ENCODE measurements at regions of chr1 and their contacts with region 1.

Region 1: GRCh38 chr1:16946646-16947045 is 24.9 kb downstream of the CROCC start:
- DNase-seq: no peak
- ATAC-seq: no peak
- H3K4me3 ChIP-seq: no peak overlapping the region
- H3K27ac ChIP-seq: no peak overlapping the region
- H3K4me1 ChIP-seq: no peaks in the 10 kb centered on the region
- H3K27me3 ChIP-seq: no peaks in the 10 kb centered on the region
- CTCF ChIP-seq: no peak
- EP300 ChIP-seq: no peak
- POLR2A ChIP-seq: no peak
- RAD21 ChIP-seq: no peak

Region 2: DNA sequence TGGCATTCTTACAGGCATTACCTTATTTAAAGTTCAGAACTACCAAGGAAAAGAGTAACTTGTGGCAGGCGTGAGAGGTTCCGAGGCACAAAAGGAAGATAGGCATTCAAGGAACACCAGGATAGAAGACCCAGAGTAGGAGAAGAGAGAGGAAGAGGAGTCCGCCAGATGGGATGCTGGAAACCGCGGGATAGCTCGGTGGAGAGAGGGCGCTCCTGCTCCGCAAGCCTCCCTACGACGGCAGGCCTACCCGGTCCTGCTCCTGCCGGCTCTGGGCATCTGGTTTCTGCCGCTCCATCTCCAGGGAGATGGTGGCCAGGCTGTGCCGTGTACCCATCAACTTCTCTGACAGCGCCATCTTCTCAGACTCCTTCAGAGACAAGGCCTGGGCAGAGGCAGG is 327.9 kb before region 1 on chr1:
- CTCF ChIA-PET with region 1: interaction called, 6 read pairs
- POLR2A ChIA-PET with region 1: interaction called, 15 read pairs
- in situ Hi-C with region 1: no loop called
- intact Hi-C with region 1: loop called (anchors 1 kb)
- DNase-seq: no peak
- ATAC-seq: no peak
- H3K4me3 ChIP-seq: no peak overlapping the region
- H3K27ac ChIP-seq: no peak overlapping the region
- H3K4me1 ChIP-seq: peaks cover 10% of the 10 kb centered on the region
- H3K27me3 ChIP-seq: peaks cover 0 to 1% of the 10 kb centered on the region in 2 experiments; a peak in 1 of 5 replicates
- CTCF ChIP-seq: peak; percentile 30; the same call in 1 of the 2 replicates
- EP300 ChIP-seq: no peak
- POLR2A ChIP-seq: no peak
- RAD21 ChIP-seq: no peak

Region 3: DNA sequence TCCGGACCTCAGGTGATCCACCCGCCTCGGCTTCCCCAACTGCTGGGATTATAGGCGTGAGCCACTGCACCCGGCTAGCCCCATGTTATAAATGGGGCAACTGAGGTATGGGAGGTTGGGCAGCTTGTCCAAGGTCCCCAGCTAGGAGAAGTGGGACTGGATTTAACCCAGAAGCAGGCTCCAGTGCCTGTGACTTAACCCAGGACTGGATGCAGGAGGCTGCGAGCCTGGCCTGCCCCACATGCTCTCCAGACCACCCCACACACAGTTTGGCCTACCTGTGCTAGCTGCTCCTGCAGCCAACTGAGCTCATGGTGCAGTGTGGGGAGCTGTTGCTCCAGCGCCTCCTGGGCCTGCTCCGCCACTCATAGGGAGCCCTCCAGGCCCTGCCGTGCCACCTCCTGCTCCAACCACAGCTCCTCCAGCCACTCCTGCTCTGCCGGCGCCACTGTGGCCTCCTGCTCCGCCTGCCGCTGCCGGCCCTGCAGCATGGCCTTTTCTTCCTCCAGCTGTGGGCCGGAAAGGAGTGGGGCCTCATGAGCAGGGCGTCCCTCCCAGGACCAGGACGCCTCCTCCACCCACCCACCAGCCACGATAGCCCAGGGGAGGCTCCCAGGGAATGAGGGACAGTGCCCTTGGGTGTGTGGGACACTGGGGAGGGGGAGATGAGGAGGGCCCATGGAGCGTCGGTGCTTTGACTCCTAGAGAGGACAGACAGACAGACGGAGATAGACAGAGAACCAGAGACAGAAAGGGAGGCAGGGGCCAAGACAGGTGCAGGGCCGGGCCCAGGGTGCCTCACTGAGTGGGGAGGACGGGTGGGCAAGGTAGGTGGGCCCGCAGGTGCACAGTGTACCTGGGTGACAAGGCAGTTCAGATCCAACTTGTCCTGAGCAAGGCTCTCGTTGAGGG is 320.9 kb before region 1 on chr1:
- CTCF ChIA-PET with region 1: interaction called, 6 read pairs
- POLR2A ChIA-PET with region 1: interaction called, 15 read pairs
- in situ Hi-C with region 1: no loop called
- intact Hi-C with region 1: loop called (anchors 2 kb)
- DNase-seq: no peak
- ATAC-seq: peak; percentile 6
- H3K4me3 ChIP-seq: no peak overlapping the region
- H3K27ac ChIP-seq: no peak overlapping the region
- H3K4me1 ChIP-seq: no peaks in the 10 kb centered on the region
- H3K27me3 ChIP-seq: no peaks in the 10 kb centered on the region
- CTCF ChIP-seq: no peak
- EP300 ChIP-seq: no peak
- POLR2A ChIP-seq: no peak
- RAD21 ChIP-seq: no peak

Region 4: DNA sequence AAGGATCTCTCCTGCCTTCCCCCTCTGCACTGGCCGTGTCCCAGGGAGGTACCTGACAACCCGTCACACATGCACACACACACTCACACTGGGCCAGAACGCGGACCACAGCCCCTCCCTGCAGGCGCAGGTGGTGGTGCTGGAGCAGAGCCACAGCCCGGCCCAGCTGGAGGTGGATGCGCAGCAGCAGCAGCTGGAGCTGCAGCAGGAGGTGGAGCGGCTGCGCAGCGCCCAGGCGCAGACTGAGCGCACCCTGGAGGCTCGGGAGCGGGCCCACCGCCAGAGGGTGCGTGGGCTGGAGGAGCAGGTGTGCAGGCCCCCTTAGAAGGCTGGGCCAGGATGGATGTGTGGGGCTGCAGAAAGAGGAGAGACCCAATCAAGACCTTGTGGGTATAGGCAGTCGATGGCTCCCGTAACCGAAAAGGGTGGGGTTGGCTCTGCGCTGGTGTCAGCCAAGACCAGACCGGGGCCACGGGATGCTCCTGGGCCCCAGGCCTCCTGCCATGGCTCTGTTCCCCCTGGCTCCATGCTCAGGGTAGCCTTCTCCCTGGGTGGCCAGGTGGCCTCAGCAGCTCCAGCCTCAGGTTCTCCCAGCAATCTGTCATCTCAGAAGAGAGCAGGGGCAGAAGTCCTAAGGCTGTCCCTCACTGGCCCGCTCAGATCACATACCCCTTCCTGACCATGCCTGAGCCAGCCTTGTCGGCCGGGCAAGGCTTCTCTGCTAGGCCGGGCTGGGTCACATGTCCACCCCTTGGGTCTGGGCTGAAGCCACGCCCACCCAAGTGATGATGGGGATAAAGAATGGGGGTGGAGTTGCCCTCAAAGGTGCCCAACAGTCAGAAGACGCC is 24.9 kb after region 1 on chr1:
- CTCF ChIA-PET with region 1: no interaction called
- POLR2A ChIA-PET with region 1: no interaction called
- in situ Hi-C with region 1: no loop called
- intact Hi-C with region 1: no loop called
- DNase-seq: no peak
- ATAC-seq: peak; percentile 19
- H3K4me3 ChIP-seq: no peak overlapping the region
- H3K27ac ChIP-seq: no peak overlapping the region
- H3K4me1 ChIP-seq: no peaks in the 10 kb centered on the region
- H3K27me3 ChIP-seq: peaks cover 1 to 4% of the 10 kb centered on the region in 2 experiments; a peak in 2 of 5 replicates
- CTCF ChIP-seq: no peak
- EP300 ChIP-seq: no peak
- POLR2A ChIP-seq: no peak
- RAD21 ChIP-seq: no peak

Region 5: DNA sequence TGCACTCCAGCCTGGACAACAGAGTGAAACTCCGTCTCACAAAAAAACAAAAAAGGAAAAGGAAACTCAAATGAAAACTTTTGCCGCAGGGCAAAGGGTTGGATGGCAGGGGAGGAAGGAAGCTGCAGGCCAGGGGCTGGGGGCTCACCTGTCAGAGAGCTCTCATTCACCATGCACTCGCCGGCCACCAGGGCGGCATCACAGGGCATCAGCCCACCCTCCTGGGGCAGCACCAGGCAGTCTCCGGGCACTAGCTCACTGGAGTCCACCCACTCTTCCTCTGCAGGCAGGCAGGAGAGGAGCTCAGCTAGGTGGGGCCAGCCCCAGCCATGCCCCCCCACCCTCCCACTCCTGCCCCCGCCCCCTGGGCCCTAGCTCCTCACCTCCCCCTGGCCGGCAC is 53.2 kb after region 1 on chr1:
- CTCF ChIA-PET with region 1: no interaction called
- POLR2A ChIA-PET with region 1: no interaction called
- in situ Hi-C with region 1: no loop called
- intact Hi-C with region 1: no loop called
- DNase-seq: no peak
- ATAC-seq: no peak
- H3K4me3 ChIP-seq: no peak overlapping the region
- H3K27ac ChIP-seq: no peak overlapping the region
- H3K4me1 ChIP-seq: no peaks in the 10 kb centered on the region
- H3K27me3 ChIP-seq: no peaks in the 10 kb centered on the region
- CTCF ChIP-seq: no peak
- EP300 ChIP-seq: no peak
- POLR2A ChIP-seq: no peak
- RAD21 ChIP-seq: no peak

Region 6: DNA sequence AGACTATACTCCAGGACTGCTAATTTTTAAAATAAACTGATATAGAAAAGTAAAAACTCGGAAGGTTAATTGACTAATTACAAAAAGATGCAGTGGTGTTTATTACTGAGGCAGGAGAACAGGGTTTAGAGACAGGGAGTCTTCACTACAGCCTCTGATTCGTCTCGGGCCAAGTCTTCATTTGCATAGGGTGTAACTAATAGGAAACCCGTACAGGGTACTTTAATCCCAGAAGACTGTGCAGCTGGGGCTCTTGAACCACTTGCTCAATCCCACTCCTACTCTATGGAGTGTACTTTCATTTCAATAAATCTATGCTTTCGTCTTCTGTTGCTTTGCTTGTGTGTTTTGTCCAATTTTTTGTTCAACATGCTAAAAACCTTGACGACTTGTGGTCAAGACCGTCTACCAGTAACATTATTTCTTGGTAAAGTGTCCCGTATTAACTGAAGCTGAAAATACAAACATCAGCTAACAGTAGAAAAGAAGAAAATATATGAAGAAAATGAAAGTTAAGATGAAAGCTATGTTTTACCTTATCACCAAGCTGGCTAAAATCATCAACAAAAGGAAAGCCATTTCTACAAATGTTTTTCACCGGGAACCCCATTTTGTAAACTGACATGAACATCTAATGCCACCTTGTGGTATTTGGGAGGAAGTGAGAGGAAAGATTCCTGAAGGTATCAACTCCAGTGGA is 99.1 kb after region 1 on chr1:
- CTCF ChIA-PET with region 1: interaction called, 26 read pairs
- POLR2A ChIA-PET with region 1: no interaction called
- in situ Hi-C with region 1: no loop called
- intact Hi-C with region 1: loop called (anchors 1 kb)
- DNase-seq: peak; percentile 63
- ATAC-seq: no peak
- H3K4me3 ChIP-seq: no peak overlapping the region
- H3K27ac ChIP-seq: no peak overlapping the region
- H3K4me1 ChIP-seq: 0 out of 2 replicates have a peak, but pooled peaks cover 5% of the 10 kb centered on the region
- H3K27me3 ChIP-seq: no peaks in the 10 kb centered on the region
- CTCF ChIP-seq: peak; percentile 73
- EP300 ChIP-seq: no peak
- POLR2A ChIP-seq: no peak
- RAD21 ChIP-seq: peak; percentile 26; the same call in 1 of the 2 replicates

Region 7: DNA sequence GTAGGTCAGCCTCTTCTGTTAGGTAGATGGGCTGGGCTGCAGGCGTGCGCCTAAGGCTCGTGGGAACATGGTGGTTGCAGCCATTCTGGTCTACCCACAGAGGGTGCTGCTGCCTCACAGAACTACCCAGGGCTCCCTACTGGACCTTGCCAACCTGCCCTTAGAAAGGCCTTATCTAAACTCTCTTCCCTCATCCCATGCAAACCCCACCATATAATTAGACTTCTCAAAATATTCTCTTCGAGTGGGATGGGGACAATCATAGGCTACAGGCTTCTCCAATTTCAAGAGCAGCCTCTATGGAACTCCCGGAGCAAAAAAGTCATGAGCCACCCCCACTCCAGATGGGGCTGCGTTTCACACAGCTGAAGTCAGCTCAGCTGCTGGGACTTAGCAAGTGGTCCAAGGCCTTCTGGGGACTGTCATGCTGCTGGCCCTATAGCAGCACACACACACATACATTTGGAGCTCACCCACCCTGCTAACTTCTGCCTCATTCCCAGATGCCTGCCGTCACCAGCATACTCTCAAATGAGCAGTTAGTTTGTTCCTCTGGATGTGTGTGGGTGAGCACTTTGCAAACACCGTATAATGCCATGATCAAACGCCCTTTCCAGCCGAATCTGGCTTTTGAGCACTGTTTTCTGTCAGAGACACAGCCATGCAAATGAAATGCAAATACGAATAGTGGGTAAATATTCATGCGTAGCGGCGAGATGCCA is 113.3 kb after region 1 on chr1:
- CTCF ChIA-PET with region 1: no interaction called
- POLR2A ChIA-PET with region 1: no interaction called
- in situ Hi-C with region 1: no loop called
- intact Hi-C with region 1: no loop called
- DNase-seq: peak; percentile 55
- ATAC-seq: peak; percentile 98
- H3K4me3 ChIP-seq: no peak overlapping the region
- H3K27ac ChIP-seq: no peak overlapping the region
- H3K4me1 ChIP-seq: peaks cover 15% of the 10 kb centered on the region
- H3K27me3 ChIP-seq: 0 out of 5 replicates have a peak, but pooled peaks cover 0 to 1% of the 10 kb centered on the region in 2 experiments
- CTCF ChIP-seq: peak; percentile 88
- EP300 ChIP-seq: no peak
- POLR2A ChIP-seq: no peak
- RAD21 ChIP-seq: peak; percentile 80